Heart right ventricle (tissue), 16 donors: ENCODE measurements at regions of chr12 and their contacts with region 1.

Region 1: DNA sequence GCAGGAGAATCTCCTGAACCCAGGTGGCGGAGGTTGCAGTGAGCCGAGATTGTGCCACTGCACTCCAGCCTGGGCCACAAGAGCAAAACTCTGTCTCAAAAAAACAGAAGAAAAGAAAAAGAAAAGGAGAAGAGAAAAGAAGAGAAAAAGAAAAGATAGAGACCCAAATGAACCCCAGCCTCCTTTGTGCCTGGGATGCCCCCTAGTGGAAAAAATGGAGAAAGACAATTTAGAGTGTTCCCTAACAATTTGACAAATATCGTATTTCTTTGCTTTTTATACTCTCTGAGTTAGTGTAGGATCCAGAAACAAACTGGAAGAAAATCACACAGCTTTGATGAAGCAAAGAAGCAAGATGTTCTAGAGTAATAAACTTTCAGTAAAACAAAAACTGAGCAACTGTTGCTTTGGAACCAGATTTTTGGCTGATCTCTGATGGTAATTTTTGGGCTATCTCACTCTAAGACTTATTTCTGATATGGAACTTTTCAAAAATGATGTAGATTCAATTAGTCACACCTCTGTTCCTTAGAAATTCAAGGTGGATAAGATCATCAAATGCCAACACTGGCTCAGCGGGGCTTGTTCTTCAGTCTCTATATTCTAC is 18.6 kb upstream of the PRKAB1 start:
- DNase-seq: no peak
- ATAC-seq: no peak
- H3K4me3 ChIP-seq: no peak overlapping the region
- H3K27ac ChIP-seq: no peak overlapping the region
- H3K4me1 ChIP-seq: no peaks in the 10 kb centered on the region
- H3K27me3 ChIP-seq: no peaks in the 10 kb centered on the region
- CTCF ChIP-seq: peak; percentile 48 to 81 (median 63)

Region 2: DNA sequence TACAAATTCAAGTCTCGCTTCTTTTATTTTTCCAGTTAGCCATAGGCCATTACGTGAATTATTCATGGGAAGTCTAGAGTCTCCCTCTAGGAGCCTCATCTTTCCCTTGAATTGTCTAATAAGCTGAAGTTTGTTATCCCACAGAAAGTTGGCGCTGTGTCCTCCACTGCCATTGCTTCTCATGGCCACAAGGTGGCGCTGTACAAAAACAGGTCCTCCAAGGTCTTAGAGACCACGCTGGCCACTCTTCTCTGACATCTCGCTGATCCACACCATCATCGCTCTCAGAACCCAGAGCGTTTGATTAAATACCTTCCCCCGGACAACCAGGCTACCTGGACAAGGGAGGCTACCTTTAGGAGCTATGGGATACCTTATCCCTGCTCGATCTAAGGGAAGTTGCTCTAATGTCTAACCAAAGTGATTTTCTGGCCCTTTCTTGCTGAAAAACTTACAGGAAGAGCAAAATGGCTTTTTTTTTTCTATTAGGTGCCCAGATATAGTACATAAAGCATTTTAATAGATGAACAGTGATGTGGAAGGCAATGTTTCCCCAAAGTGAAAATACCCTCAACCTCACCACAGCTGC is 204.8 kb before region 1 on chr12:
- intact Hi-C with region 1: loop called in 2 of 10 experiments (anchors 5 kb)
- DNase-seq: peak; percentile 7 to 13
- ATAC-seq: peak in 1 of 8 donors; percentile 55
- H3K4me3 ChIP-seq: no peak overlapping the region
- H3K27ac ChIP-seq: no peak overlapping the region
- H3K4me1 ChIP-seq: no peaks in the 10 kb centered on the region
- H3K27me3 ChIP-seq: peaks cover 0 to 15% (median 0%) of the 10 kb centered on the region in 7 donors
- CTCF ChIP-seq: peak; percentile 58 to 96 (median 79)

Region 3: GRCh38 chr12:119594772-119595445 is 54.4 kb before region 1 on chr12:
- intact Hi-C with region 1: loop called in 1 of 10 experiments (anchors 10 kb)
- DNase-seq: peak; percentile 21 to 24
- ATAC-seq: peak; percentile 74 to 86 (median 80)
- H3K4me3 ChIP-seq: peak overlapping the region; percentile 38 to 69 (median 55)
- H3K27ac ChIP-seq: peak overlapping the region in 9 of 10 donors; percentile 38 to 88 (median 71)
- H3K4me1 ChIP-seq: peaks cover 0 to 36% (median 17%) of the 10 kb centered on the region in 9 donors
- H3K27me3 ChIP-seq: peaks cover 0 to 73% (median 55%) of the 10 kb centered on the region in 7 donors
- CTCF ChIP-seq: peak in 1 of 9 donors; percentile 3

Region 4: DNA sequence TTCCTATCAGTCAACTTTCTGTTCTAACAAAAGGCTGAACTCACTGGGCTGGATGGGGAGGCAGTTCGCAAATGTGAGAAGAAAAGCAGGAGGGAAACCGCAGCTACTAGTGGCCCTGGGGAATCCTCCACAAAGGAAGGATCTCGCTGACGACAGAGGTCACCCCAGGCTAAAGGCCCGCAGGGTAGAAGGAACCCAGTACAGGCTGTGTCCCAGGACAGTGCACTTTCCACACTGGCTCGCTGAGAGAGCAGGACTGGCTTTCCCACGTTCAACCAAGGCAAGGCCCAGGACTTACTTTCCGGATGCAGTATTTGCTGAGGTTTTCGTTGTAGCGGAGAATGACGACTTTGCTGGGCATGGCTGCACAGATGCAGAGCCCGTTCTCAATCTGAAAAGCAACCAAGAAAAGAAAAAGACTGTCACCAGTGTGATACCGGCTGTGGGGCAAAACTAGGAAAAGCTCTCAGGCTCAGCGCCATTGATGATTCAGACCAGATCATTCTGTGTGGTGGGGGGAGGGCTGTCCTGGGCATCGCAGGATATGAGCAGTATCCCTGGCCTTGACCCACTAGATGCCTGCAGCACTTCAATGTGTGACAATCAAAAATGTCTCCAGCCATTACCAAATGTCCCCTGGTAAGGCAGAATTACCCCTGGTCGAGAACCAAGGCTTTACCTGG is 54.9 kb after region 1 on chr12:
- intact Hi-C with region 1: no loop called
- DNase-seq: peak; percentile 43 to 64
- ATAC-seq: peak; percentile 78 to 99 (median 95)
- H3K4me3 ChIP-seq: no peak overlapping the region
- H3K27ac ChIP-seq: peak overlapping the region in 9 of 10 donors; percentile 46 to 79 (median 69)
- H3K4me1 ChIP-seq: peaks cover 0 to 15% (median 8%) of the 10 kb centered on the region in 9 donors
- H3K27me3 ChIP-seq: no peaks in the 10 kb centered on the region
- CTCF ChIP-seq: peak in 1 of 9 donors; percentile 22